ENCODE measurements at regions of chr1 and their contacts with region 1.

Region 1: GRCh38 chr1:43529206-43529731 is 1.4 kb upstream of the PTPRF start:
- DNase-seq: peak; percentile 86
- H3K4me3 ChIP-seq: no peak overlapping the region
- H3K27ac ChIP-seq: peak overlapping the region in 1 of 2 donors; percentile 27
- H3K4me1 ChIP-seq: peaks cover 16% of the 10 kb centered on the region
- H3K27me3 ChIP-seq: no peaks in the 10 kb centered on the region
- CTCF ChIP-seq: peak; percentile 87 to 99 (median 98)
- POLR2A ChIP-seq: no peak

Region 2: GRCh38 chr1:43227143-43227764 is 302.0 kb before region 1 on chr1:
- intact Hi-C with region 1: loop called (anchors 10 kb)
- DNase-seq: peak; percentile 83
- H3K4me3 ChIP-seq: no peak overlapping the region
- H3K27ac ChIP-seq: no peak overlapping the region
- H3K4me1 ChIP-seq: peaks cover 6% of the 10 kb centered on the region
- H3K27me3 ChIP-seq: no peaks in the 10 kb centered on the region
- CTCF ChIP-seq: peak; percentile 95 to 97 (median 96)
- POLR2A ChIP-seq: no peak

Region 3: GRCh38 chr1:43650310-43651085 is 121.2 kb after region 1 on chr1:
- intact Hi-C with region 1: loop called (anchors 2 kb)
- DNase-seq: peak; percentile 98
- H3K4me3 ChIP-seq: peak overlapping the region; percentile 64 to 71
- H3K27ac ChIP-seq: peak overlapping the region; percentile 95 to 97
- H3K4me1 ChIP-seq: peaks cover 3% of the 10 kb centered on the region
- H3K27me3 ChIP-seq: no peaks in the 10 kb centered on the region
- CTCF ChIP-seq: no peak
- POLR2A ChIP-seq: peak; percentile 97

Region 4: DNA sequence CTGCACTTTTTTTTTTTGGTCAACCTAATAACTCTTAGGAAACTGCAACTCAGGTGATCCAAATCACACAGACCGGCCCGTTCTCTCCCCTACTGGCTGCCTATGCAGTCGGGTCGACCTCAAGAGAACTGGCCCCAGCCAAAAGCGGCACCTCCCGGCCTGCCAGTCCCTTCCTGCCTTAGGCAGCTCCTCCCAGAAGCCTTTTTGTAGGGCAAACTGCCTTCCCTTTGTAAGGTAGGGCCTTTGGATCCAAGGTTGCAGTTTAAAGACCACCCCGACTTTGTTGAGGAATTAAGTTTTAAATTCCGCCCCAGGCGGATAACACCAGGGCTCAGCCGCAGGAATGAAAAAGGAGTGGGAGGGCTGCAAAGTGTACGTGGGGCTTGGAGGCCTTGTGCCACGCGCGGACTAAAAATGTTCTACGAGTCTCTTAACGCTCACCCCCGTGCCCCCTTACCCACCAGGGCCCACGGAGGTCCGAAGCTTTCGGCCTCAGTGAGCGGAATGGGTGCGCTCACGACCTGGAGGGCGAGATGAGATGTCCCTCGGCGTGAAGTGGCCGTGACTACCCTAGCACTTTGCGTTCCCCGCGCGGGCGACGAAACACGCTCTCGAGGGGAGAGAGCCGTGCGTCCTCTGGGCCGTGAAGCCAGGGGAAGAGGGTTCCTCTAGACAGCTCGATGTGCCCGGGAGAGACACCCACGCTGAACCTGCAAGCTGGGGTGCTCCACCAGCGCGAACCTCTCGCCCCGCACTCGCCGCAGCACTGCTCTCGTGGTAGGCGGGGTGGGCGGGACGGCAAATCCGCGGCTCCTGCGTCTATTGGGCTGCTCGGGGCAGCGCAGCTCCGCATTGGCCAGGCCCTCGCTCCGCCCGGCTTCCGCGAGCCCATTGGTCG is 177.6 kb after region 1 on chr1:
- intact Hi-C with region 1: loop called (anchors 5 kb)
- DNase-seq: peak; percentile 89
- H3K4me3 ChIP-seq: peak overlapping the region; percentile 67 to 90
- H3K27ac ChIP-seq: peak overlapping the region in 1 of 2 donors; percentile 72
- H3K4me1 ChIP-seq: peaks cover 2% of the 10 kb centered on the region
- H3K27me3 ChIP-seq: no peaks in the 10 kb centered on the region
- CTCF ChIP-seq: no peak
- POLR2A ChIP-seq: peak; percentile 52

Region 5: DNA sequence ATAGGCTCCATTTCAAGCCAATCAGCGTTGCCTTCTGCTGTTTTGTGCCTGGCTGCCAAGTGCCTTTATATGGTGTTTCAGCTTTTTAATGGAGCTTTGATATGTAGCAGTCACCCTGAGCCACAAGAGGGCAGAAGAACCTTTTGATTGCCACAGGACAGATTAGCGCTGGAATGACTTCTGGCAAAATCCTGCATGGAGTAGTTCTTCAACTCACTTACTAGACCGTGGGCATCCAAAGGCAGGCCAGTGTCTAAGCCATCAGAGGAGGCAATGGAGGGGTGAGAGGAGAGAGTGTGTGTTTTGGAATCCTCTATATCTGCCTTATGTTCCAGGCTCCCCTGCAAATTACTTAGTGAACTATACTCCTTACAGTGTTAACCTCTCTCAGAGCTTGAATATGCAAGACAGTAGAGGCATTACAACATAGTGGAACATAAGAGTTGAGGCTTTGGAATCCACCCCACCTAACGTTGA is 234.3 kb after region 1 on chr1:
- intact Hi-C with region 1: loop called (anchors 5 kb)
- DNase-seq: peak; percentile 84
- H3K4me3 ChIP-seq: no peak overlapping the region
- H3K27ac ChIP-seq: no peak overlapping the region
- H3K4me1 ChIP-seq: no peaks in the 10 kb centered on the region
- H3K27me3 ChIP-seq: no peaks in the 10 kb centered on the region
- CTCF ChIP-seq: peak; percentile 32 to 95 (median 86)
- POLR2A ChIP-seq: no peak

Region 6: DNA sequence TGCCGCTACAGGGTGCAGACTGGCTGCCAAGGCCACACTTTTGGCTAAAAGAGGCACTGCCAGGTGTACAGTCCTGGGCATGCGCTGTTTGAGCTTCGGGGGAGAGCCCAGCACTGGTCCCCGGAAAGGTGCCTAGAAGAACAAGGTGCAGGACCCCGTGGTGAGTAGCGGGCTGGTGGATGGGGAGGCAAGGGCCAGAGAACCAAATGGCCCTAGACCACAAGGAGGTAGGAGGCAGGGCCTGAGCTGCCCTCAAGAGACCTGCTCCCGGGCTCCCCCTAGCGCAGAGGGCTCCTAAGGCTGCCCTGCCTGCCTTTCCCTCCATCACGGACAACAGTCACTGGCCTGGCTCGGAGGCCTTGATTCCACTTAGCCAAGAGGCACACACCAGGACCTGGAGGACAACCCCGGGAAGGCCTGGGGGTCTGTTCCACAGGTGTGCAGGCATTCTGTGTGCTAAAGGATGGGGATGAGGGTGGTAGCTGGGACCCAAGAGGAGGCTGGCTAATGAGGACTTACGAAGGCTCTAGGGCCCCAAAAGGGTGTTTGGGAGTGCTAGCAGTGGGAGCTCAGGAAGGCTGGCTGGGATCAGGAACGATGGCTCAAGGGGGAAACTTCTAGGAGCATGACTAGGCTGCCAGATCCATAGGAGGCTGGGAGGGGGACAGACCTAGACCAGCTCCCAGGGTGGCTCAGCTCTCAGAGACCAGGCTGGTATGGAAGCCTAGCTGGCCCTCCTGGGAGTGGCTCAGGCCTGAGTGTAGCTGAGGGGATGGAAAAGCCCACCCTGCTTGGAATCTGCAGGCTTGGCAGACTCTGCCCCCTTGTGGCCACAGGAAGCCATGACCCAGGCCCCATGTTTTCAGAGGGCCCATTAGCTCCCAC is 405.1 kb after region 1 on chr1:
- intact Hi-C with region 1: loop called (anchors 5 kb)
- DNase-seq: no peak
- H3K4me3 ChIP-seq: peak overlapping the region; percentile 38 to 45
- H3K27ac ChIP-seq: peak overlapping the region; percentile 75
- H3K4me1 ChIP-seq: no peaks in the 10 kb centered on the region
- H3K27me3 ChIP-seq: no peaks in the 10 kb centered on the region
- CTCF ChIP-seq: peak; percentile 84 to 93 (median 90)
- POLR2A ChIP-seq: no peak

Measured in prostate gland (tissue), 2 donors.